Motor neuron (in vitro differentiated cells): ENCODE measurements at regions of chr10 and their contacts with region 1.

Region 1: GRCh38 chr10:93095225-93095624 is 21.5 kb downstream of the CYP26A1 start:
- ATAC-seq: no peak
- H3K4me3 ChIP-seq: no peak overlapping the region
- H3K27ac ChIP-seq: no peak overlapping the region
- H3K4me1 ChIP-seq: no peaks in the 10 kb centered on the region

Region 2: DNA sequence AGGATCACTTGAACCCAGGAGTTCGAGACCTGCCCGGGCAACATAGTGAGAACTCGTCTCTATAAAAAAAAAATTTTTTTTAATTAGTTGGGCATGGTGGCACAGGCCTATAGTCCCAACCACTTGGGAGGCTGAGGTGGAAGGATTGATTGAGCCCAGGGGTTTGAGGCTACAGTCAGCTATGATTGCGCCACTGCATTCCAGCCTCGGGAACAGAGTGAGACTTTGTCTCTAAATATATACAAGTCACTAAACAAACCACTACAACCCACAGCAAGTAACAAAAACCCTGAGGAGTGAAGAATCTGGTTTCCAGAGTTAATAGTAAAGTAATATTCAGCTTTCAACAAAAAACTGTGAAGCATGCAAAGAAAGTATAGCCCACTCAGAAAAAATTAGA is 438.2 kb before region 1 on chr10:
- in situ Hi-C with region 1: no loop called
- ATAC-seq: no peak
- H3K4me3 ChIP-seq: no peak overlapping the region
- H3K27ac ChIP-seq: no peak overlapping the region
- H3K4me1 ChIP-seq: no peaks in the 10 kb centered on the region

Region 3: GRCh38 chr10:92965314-92965713 is 129.9 kb before region 1 on chr10:
- in situ Hi-C with region 1: no loop called
- ATAC-seq: peak in 1 of 8 experiments; percentile 18
- H3K4me3 ChIP-seq: no peak overlapping the region
- H3K27ac ChIP-seq: no peak overlapping the region
- H3K4me1 ChIP-seq: no peaks in the 10 kb centered on the region

Region 4: GRCh38 chr10:93293999-93294398 is 198.8 kb after region 1 on chr10:
- in situ Hi-C with region 1: loop called in 3 of 9 experiments (anchors 10 to 25 kb)
- ATAC-seq: peak in 2 of 8 experiments; percentile 11 to 25
- H3K4me3 ChIP-seq: no peak overlapping the region
- H3K27ac ChIP-seq: no peak overlapping the region
- H3K4me1 ChIP-seq: peaks cover 0 to under 1% of the 10 kb centered on the region in 2 donors